A673 (cell line): ENCODE measurements at regions of chr7 and their contacts with region 1.

Region 1: GRCh38 chr7:32164346-32164957 is 94.2 kb upstream of the PDE1C start:
- DNase-seq: peak; percentile 66
- H3K4me3 ChIP-seq: no peak overlapping the region
- H3K27ac ChIP-seq: no peak overlapping the region
- H3K4me1 ChIP-seq: no peaks in the 10 kb centered on the region
- H3K27me3 ChIP-seq: peaks cover 3% of the 10 kb centered on the region
- CTCF ChIP-seq: peak; percentile 58

Region 2: DNA sequence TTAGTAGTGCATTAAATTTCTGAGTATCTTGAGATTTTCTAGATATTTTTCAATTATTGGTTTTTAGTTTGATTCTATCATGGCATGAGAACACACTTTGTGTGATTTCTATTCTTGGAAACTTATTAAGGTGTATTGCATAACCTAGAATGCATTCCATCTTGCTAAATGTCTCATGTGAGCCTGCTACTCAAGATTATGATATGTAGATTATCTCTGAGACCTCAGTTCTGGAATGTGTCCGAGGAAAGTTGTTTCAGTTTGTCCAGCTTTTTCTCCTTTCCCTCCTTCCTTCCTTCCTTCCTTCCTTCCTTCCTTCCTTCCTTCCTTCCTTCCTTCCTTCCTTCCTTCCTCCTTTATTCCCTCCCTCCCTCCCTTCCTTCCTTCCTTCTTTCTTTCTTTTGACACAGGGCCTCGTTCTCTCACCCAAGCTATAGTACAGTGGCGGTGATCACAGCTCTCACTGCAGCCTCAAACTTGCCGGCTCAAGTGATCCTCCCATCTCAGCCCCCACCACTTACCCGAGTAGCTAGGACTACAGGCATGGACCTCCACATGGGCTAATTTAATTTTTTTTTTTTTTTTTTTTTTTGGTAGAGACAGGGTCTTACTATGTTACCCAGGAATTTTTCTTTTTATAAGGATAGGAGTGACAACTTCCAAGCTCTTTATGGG is 643.0 kb before region 1 on chr7:
- CTCF ChIA-PET with region 1: no interaction called
- POLR2A ChIA-PET with region 1: interaction called, 19 read pairs
- intact Hi-C with region 1: no loop called
- DNase-seq: peak; percentile 91
- H3K4me3 ChIP-seq: no peak overlapping the region
- H3K27ac ChIP-seq: peak overlapping the region; percentile 91
- H3K4me1 ChIP-seq: peaks cover 28% of the 10 kb centered on the region
- H3K27me3 ChIP-seq: no peaks in the 10 kb centered on the region
- CTCF ChIP-seq: no peak

Region 3: GRCh38 chr7:31782411-31782991 is 382.0 kb before region 1 on chr7:
- CTCF ChIA-PET with region 1: no interaction called
- POLR2A ChIA-PET with region 1: no interaction called
- intact Hi-C with region 1: loop called (anchors 10 kb)
- DNase-seq: peak; percentile 79
- H3K4me3 ChIP-seq: no peak overlapping the region
- H3K27ac ChIP-seq: no peak overlapping the region
- H3K4me1 ChIP-seq: no peaks in the 10 kb centered on the region
- H3K27me3 ChIP-seq: peaks cover 36% of the 10 kb centered on the region
- CTCF ChIP-seq: peak; percentile 78